ENCODE measurements at regions of chr19 and their contacts with region 1.

Region 1: GRCh38 chr19:33406521-33407139 is 33.1 kb downstream of the CEBPG start:
- DNase-seq: peak in 1 of 2 donors; percentile 81
- H3K4me3 ChIP-seq: no peak overlapping the region
- H3K27ac ChIP-seq: no peak overlapping the region
- H3K4me1 ChIP-seq: no peaks in the 10 kb centered on the region
- H3K27me3 ChIP-seq: no peaks in the 10 kb centered on the region
- CTCF ChIP-seq: peak; percentile 88 to 96 (median 94)

Region 2: GRCh38 chr19:33235269-33235995 is 171.2 kb before region 1 on chr19:
- intact Hi-C with region 1: loop called (anchors 1 kb)
- DNase-seq: peak in 1 of 2 donors; percentile 89
- H3K4me3 ChIP-seq: no peak overlapping the region
- H3K27ac ChIP-seq: no peak overlapping the region
- H3K4me1 ChIP-seq: no peaks in the 10 kb centered on the region
- H3K27me3 ChIP-seq: no peaks in the 10 kb centered on the region
- CTCF ChIP-seq: peak; percentile 69 to 91 (median 79)